Activated CD4-positive, alpha-beta memory T cell treated with anti-CD3 and anti-CD28 coated beads for 36 hours (primary cell): ENCODE measurements at regions of chr17 and their contacts with region 1.

Region 1: GRCh38 chr17:35192708-35193107 is 1.5 kb downstream of the SLC35G3 start:
- DNase-seq: no peak
- H3K4me3 Mint-ChIP-seq: no peak overlapping the region
- H3K27ac Mint-ChIP-seq: no peak overlapping the region
- H3K4me1 Mint-ChIP-seq: peaks cover 24% of the 10 kb centered on the region
- H3K27me3 Mint-ChIP-seq: no peaks in the 10 kb centered on the region

Region 2: DNA sequence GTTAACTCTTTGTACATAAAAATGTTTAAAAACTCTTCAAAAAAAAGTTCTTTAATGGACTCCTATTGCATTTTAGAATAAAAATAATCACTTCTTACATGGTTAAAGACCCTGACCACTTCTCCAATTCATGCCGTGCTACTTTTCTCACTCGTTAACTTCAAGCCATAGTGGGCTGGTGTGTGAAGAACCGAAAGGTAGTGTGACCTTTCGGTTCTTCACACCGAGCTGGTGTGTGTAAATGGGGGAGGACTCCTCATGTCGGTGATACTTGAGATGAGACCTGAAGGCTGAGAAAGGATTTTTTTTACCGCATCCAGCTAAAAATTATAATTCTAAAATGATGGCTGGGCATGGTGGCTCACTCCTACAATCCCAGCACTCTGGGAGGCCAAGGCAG is 151.3 kb before region 1 on chr17:
- CTCF ChIA-PET with region 1: no interaction called
- POLR2A ChIA-PET with region 1: no interaction called
- intact Hi-C with region 1: no loop called
- DNase-seq: no peak
- H3K4me3 Mint-ChIP-seq: no peak overlapping the region
- H3K27ac Mint-ChIP-seq: no peak overlapping the region
- H3K4me1 Mint-ChIP-seq: peaks cover 46% of the 10 kb centered on the region
- H3K27me3 Mint-ChIP-seq: no peaks in the 10 kb centered on the region

Region 3: DNA sequence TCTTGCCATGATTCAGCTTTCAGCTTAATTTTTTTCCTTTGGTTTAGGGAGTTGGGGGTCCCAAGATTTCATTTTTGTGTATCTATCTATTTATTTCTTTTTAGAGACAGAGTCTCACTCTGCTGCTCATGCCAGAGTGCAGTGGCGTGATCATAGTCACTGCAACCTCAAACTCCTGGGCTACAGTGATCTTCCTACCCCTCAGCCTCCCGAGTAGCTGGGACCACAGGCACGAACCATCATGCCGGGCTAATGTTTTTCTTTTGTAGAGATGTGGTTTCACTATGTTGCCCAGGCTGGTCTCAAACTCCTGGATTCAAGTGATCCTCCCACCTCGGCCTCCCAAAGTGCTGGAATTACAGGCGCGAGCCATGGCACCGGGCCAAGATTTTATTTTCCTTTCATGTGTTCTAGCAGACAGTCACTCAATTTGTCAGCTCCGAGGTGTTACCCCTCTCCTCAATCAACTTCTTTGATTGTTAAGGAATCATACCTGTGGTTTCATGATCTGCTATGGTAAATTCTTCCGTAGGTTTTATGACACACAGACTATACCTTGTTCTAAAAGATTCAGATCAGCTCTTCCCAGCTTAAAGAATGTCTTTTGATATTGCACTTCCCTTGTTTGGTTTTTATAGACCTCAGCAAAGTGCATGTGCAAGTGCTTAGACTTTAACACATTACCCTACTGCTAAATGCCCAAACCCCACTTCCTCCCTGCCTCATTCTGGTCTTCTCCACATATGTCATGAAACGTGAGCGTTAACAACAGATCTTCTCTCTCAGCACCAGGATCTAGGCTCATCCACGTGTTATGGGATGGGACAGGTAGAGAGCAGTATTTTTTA is 32.1 kb before region 1 on chr17:
- CTCF ChIA-PET with region 1: no interaction called
- POLR2A ChIA-PET with region 1: no interaction called
- intact Hi-C with region 1: no loop called
- DNase-seq: peak; percentile 59
- H3K4me3 Mint-ChIP-seq: peak overlapping the region; percentile 28
- H3K27ac Mint-ChIP-seq: peak overlapping the region; percentile 46
- H3K4me1 Mint-ChIP-seq: peaks cover 50% of the 10 kb centered on the region
- H3K27me3 Mint-ChIP-seq: no peaks in the 10 kb centered on the region

Region 4: DNA sequence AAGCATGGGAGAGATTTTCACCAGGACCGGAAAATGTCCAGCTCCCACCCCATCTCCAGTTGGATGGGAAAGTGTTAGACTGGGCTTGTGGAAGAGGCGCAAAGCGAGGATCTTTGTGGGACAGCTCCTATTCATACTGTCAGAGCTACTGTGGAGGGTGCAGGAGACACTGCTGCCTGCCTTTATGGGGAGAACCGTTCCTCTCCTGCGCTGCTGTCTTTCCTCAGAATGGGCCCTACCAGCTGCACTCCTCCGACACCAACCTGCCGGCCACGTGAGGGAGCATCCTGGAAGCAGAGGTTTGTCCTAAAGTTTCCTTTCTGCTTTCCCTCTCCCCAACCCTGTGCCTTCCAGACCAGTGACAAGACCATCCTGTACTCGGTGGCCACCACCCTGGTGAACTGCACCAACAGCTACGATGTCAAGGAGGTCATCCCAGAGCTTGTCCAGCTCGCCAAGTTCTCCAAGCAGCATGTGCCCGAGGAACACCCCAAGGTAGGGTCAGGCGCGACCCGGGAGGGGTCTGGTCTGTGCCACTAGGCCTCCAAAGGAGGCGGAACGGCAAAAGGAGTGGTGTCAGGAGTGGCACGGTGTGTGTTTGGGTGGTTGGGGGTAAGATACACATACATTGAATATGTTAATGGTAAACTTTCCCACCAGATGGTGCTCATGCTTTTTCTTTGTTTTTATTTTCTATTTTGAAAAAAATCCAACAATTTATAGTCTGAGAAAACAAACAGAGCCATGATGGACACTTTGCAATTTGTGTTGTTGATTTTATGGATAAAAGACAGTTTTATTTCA is 21.5 kb before region 1 on chr17:
- CTCF ChIA-PET with region 1: no interaction called
- POLR2A ChIA-PET with region 1: no interaction called
- intact Hi-C with region 1: no loop called
- DNase-seq: peak; percentile 10
- H3K4me3 Mint-ChIP-seq: no peak overlapping the region
- H3K27ac Mint-ChIP-seq: peak overlapping the region; percentile 38
- H3K4me1 Mint-ChIP-seq: peaks cover 33% of the 10 kb centered on the region
- H3K27me3 Mint-ChIP-seq: no peaks in the 10 kb centered on the region

Region 5: GRCh38 chr17:35229638-35230037 is 36.9 kb after region 1 on chr17:
- CTCF ChIA-PET with region 1: no interaction called
- POLR2A ChIA-PET with region 1: no interaction called
- intact Hi-C with region 1: loop called (anchors 1 kb)
- DNase-seq: no peak
- H3K4me3 Mint-ChIP-seq: no peak overlapping the region
- H3K27ac Mint-ChIP-seq: no peak overlapping the region
- H3K4me1 Mint-ChIP-seq: peaks cover 22% of the 10 kb centered on the region
- H3K27me3 Mint-ChIP-seq: no peaks in the 10 kb centered on the region